ENCODE measurements at regions of chr12 and their contacts with region 1.

Region 1: DNA sequence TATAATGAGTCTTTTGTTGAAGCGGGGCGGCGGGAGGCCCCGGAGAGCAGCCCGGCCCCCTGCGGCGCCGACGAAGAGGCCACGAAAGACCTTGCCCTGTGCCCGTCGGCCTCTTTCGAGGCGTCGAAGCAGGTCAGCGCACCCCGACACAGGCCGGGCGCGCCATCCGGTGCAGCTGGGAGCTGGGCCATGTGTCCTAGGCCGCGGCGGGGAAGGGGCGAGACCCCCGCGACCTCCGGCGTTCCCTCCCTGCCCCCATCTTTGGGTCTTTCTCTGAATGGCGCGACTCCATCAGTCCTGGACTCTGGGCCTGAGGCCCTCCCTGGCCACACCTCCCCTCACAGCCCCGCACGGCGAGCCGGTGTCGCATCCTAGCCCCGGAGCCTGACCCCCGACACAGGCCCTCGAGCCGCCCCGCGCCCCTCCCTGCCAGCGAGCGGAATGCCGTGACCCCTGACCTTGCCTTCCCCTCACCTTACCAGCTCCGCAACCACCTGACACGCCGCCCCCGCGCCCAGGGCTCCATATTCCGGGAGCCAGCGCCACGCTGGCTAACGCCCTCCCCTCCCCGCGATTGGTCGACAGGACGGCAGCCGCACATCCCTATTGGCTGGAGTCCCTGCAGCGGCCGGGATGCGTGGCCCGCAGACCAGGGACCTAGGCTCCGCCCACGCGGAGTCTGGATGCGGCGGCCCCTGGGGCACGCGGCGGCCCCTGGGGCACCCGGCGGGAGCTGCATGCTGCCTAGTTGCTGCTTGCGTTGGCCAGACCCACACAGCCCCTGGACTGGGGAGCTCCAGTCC is at the start of gene SLC11A2:
- DNase-seq: peak; percentile 97
- ATAC-seq: peak; percentile 88
- H3K4me3 Mint-ChIP-seq: peak within 1 kb of the TSS; percentile 93
- H3K27ac Mint-ChIP-seq: peak within 1 kb of the TSS; percentile 98
- H3K4me1 Mint-ChIP-seq: peaks cover 55% of the 10 kb centered on the region
- H3K27me3 Mint-ChIP-seq: no peaks in the 10 kb centered on the region
- total RNA-seq, gene SLC11A2: 31.0 to 32.9 TPM

Region 2: DNA sequence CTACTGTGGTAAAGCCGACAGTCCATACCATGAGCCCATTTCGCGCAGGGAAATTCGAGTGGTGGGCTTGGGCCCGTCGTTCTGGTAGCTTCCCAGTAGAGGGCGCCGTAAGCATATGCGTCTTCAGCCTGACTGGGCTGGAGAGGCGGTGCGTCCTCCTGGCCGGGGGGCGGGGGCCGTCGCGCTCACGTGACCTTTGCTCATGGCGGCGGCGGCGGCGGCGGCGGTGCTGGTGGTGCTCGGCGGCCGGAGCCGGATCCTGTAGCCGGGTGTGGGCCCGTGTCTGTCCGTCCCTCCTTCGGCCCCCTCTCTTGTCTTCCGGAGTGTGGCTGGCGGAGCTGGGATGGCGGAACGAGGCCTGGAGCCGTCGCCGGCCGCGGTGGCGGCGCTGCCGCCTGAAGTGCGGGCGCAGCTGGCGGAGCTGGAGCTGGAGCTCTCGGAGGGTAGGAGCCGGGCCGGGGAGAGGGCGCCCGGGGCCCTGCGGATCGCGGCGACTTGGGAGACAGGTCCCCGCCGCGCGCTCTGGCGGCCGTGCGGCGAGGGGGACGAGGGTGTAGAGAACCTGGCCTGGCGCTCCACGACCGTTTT is 521.1 kb before region 1 on chr12 and contains the start of gene DIP2B:
- CTCF ChIA-PET with region 1: no interaction called
- POLR2A ChIA-PET with region 1: no interaction called
- intact Hi-C with region 1: loop called in 1 of 2 experiments (anchors 10 kb)
- DNase-seq: peak; percentile 98
- ATAC-seq: peak; percentile 85
- H3K4me3 Mint-ChIP-seq: peak within 1 kb of the TSS; percentile 98
- H3K27ac Mint-ChIP-seq: peak within 1 kb of the TSS; percentile 96
- H3K4me1 Mint-ChIP-seq: peaks cover 43% of the 10 kb centered on the region
- H3K27me3 Mint-ChIP-seq: no peaks in the 10 kb centered on the region
- total RNA-seq, gene DIP2B: 29.2 to 29.4 TPM

Region 3: DNA sequence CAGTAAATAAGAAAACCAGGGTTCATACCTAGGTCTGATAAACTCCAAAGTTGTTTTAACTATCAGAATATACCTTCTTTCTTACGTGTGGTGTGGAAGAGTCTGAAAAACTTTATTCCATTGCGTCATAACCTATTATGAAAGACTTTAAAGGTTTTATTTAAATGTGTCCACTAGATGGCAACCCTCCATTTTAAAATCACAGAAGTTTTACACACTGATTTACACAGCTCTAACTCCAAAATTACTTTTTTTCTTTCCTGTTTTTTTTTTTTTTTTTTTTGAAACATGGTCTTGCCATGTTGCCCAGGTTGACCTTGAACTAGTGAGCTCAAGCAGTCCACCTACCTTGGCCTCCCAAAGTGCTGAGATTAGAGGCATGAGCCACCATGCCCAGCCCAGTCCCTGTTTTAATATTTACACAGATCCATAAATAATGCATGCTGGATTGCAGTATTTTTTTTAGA is 200.6 kb before region 1 on chr12:
- CTCF ChIA-PET with region 1: interaction called, 41 read pairs
- POLR2A ChIA-PET with region 1: interaction called, 8 read pairs
- intact Hi-C with region 1: loop called (anchors 1 to 2 kb)
- DNase-seq: no peak
- ATAC-seq: peak; percentile 61
- H3K4me3 Mint-ChIP-seq: no peak overlapping the region
- H3K27ac Mint-ChIP-seq: peak overlapping the region; percentile 35
- H3K4me1 Mint-ChIP-seq: peaks cover 6% of the 10 kb centered on the region
- H3K27me3 Mint-ChIP-seq: no peaks in the 10 kb centered on the region

Region 4: GRCh38 chr12:51009056-51009440 is 17.0 kb before region 1 on chr12:
- CTCF ChIA-PET with region 1: interaction called, 40 read pairs
- POLR2A ChIA-PET with region 1: interaction called, 18 read pairs
- intact Hi-C with region 1: loop called (anchors 1 kb)
- DNase-seq: peak; percentile 79
- ATAC-seq: peak; percentile 92
- H3K4me3 Mint-ChIP-seq: peak overlapping the region; percentile 42
- H3K27ac Mint-ChIP-seq: peak overlapping the region; percentile 90
- H3K4me1 Mint-ChIP-seq: peaks cover 48% of the 10 kb centered on the region
- H3K27me3 Mint-ChIP-seq: no peaks in the 10 kb centered on the region

Region 5: DNA sequence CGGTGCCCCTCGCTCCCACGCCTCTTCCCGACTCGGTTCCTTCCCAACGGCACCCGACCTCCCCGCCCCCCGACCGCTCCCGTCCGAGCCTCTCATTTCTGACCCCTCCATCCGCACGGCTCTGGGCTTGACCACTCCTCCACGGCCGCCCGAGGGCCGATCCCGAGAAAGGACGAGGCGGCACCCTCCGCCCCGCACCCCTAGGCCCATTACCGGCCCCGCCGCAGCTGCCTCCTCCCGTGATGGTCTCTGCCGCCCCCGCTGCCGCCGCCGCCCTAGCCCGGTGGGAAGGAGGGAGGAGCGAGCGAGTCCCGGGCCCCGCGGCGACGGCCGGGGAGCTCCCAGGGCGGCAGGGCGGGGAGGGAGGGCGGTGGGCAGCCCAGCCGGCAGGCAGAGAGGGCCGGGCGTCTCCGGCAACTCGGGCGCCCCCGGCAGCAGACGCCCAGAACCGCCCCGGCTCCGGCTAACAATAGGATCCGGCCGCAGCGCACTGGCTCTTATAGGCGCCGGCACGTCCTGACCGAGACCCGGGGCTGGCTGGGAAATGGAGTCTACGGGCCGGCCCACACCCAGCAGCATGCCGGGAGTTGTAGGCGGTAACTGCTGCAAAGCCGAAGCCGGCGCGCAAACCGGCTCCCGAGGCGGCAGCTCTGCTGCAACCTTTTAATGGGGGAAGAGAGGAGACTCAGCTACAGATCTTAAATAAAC is 57.2 kb after region 1 on chr12 and contains the start of gene CSRNP2:
- CTCF ChIA-PET with region 1: no interaction called
- POLR2A ChIA-PET with region 1: interaction called, 7 read pairs
- intact Hi-C with region 1: loop called (anchors 1 to 2 kb)
- DNase-seq: peak; percentile 97
- ATAC-seq: peak; percentile 99
- H3K4me3 Mint-ChIP-seq: peak within 1 kb of the TSS; percentile 95
- H3K27ac Mint-ChIP-seq: peak within 1 kb of the TSS; percentile 86
- H3K4me1 Mint-ChIP-seq: peaks cover 46% of the 10 kb centered on the region
- H3K27me3 Mint-ChIP-seq: no peaks in the 10 kb centered on the region
- total RNA-seq, gene CSRNP2: 12.8 to 13.6 TPM

Region 6: DNA sequence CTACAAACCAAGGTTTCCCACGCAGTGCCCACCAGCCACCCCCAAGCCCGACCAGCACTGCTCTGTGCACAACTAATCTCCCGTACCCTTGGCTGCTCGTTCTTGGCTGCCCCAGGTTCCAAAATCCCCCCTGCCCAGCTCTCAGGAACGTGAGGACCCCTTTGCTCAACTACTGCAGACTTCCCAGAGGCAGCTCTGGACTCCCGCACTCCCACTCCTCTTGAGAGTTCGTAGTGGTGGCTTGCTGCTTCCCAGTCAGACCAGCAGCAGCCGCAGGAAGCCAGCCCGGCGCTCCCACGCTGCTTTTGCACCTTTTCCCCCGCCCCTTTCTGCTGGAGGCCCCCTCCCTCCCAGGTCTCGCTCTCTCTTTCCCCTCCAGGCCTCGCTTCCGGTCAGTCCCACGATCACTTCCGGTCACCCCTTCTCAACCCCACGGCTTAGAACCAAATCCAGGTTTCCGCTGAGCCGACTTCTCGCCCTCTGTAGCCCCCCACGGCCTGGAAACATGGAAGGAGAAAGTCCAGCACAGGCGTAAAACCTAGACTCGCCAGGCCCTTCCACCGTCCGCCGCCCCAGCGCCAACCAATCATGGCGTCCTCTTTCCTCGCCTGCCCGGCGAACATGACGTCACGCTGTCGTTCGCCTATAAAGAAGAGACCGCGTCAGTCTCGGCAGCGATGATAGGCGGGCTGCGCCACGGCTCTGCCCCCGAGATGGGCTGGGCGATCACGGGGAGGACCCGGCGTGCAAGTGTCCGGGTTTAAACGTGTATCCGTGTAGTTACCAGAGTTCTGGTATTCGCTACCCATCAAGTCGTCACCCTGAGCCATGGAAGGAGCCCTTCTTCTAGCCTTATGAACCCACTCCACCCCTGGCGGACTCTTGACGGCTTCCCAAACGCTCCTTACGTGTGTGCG is 146.7 kb after region 1 on chr12 and contains the start of gene TFCP2:
- CTCF ChIA-PET with region 1: no interaction called
- POLR2A ChIA-PET with region 1: no interaction called
- intact Hi-C with region 1: loop called in 1 of 2 experiments (anchors 1 kb)
- DNase-seq: peak; percentile 97
- ATAC-seq: peak; percentile 99
- H3K4me3 Mint-ChIP-seq: no peak within 1 kb of the TSS
- H3K27ac Mint-ChIP-seq: peak within 1 kb of the TSS; percentile 78
- H3K4me1 Mint-ChIP-seq: peaks cover 10% of the 10 kb centered on the region
- H3K27me3 Mint-ChIP-seq: no peaks in the 10 kb centered on the region
- total RNA-seq, gene TFCP2: 39.5 to 47.3 TPM

Region 7: GRCh38 chr12:51229116-51229809 is 203.2 kb after region 1 on chr12:
- CTCF ChIA-PET with region 1: no interaction called
- POLR2A ChIA-PET with region 1: no interaction called
- intact Hi-C with region 1: no loop called
- DNase-seq: no peak
- ATAC-seq: no peak
- H3K4me3 Mint-ChIP-seq: no peak overlapping the region
- H3K27ac Mint-ChIP-seq: no peak overlapping the region
- H3K4me1 Mint-ChIP-seq: no peaks in the 10 kb centered on the region
- H3K27me3 Mint-ChIP-seq: no peaks in the 10 kb centered on the region

Region 8: DNA sequence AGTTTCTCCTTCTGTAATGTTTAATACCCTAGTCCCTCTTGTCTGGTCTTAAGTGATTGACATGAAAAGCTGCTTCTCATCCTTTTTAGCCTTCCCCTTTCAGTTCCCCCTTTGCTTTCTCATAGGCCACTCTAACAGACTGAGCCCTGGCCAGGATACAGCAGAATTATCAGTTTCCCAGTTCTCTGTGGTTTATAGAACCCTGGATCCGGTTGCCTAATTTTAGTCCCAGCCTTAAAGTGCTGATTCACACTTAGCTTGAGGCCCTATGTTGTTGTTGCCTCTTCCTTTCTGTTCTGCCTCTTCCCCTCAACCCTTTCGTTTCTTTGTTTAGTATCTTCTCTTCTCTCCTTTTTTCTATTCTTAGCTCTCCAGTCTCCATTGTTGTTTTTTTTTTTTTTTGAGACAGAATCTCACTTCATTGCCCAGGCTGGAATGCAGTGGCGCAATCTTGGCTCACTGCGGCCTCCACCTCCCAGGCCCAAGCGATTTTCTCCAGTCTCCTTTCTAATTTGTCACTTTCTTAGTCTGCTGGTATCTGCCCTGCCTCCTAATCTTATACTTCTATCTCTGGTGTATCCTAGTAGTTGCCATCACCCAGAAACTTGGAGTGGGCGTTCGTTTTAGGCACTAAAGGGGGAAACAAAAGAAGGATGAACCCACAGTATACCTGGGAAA is 300.9 kb after region 1 on chr12:
- CTCF ChIA-PET with region 1: no interaction called
- POLR2A ChIA-PET with region 1: no interaction called
- intact Hi-C with region 1: loop called in 1 of 2 experiments (anchors 1 kb)
- DNase-seq: no peak
- ATAC-seq: peak; percentile 18
- H3K4me3 Mint-ChIP-seq: peak overlapping the region; percentile 49
- H3K27ac Mint-ChIP-seq: peak overlapping the region; percentile 88
- H3K4me1 Mint-ChIP-seq: peaks cover 68% of the 10 kb centered on the region
- H3K27me3 Mint-ChIP-seq: no peaks in the 10 kb centered on the region

Measured in activated CD4-positive, alpha-beta T cell treated with anti-CD3 and anti-CD28 coated beads for 36 hours (primary cell).